Activated naive CD4-positive, alpha-beta T cell treated with anti-CD3 and anti-CD28 coated beads for 36 hours (primary cell): ENCODE measurements at regions of chrX and their contacts with region 1.

Region 1: GRCh38 chrX:12771445-12772069 is 19.7 kb upstream of the PRPS2 start:
- DNase-seq: peak; percentile 80
- H3K4me3 Mint-ChIP-seq: no peak overlapping the region
- H3K27ac Mint-ChIP-seq: no peak overlapping the region
- H3K4me1 Mint-ChIP-seq: peaks cover 6% of the 10 kb centered on the region
- H3K27me3 Mint-ChIP-seq: peaks cover 6% of the 10 kb centered on the region

Region 2: DNA sequence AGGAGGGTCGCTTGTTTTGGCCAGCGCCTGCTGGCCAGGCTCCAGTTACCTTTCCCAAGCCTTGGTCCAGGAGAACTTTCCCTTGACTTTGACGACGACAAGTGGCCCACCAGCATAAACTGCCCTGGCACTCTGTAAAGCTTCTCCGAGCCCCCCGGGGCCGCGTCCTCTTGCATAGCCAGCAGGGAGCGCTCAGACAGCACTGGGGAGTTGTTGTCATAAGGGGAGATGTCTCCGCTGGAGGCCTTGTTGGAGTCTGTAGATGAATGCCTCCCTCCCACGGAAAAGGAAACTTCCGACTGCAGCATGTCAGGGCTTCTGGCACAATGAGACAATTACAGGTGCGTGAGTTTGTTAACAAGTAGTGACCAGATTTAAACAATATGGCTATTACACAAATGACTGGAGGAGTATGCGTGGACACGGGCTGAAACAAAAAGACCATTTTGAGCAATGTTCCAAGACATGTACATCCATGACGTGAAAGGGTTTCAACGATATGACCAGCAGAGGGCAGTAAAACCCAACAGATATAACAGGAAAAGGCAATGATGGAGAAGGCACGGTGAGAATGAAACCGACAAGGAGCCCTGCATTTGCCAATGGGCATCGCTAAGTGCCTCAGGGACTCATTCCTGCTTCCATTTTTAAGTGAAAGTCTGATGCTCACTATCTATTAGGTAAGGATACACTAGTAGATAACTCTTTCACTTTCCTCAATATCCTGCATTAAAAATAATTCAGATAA is 1627.5 kb before region 1 on chrX:
- CTCF ChIA-PET with region 1: no interaction called
- intact Hi-C with region 1: loop called (anchors 10 kb)
- DNase-seq: peak; percentile 66
- H3K4me3 Mint-ChIP-seq: no peak overlapping the region
- H3K27ac Mint-ChIP-seq: no peak overlapping the region
- H3K4me1 Mint-ChIP-seq: peaks cover 2% of the 10 kb centered on the region
- H3K27me3 Mint-ChIP-seq: peaks cover 5% of the 10 kb centered on the region

Region 3: DNA sequence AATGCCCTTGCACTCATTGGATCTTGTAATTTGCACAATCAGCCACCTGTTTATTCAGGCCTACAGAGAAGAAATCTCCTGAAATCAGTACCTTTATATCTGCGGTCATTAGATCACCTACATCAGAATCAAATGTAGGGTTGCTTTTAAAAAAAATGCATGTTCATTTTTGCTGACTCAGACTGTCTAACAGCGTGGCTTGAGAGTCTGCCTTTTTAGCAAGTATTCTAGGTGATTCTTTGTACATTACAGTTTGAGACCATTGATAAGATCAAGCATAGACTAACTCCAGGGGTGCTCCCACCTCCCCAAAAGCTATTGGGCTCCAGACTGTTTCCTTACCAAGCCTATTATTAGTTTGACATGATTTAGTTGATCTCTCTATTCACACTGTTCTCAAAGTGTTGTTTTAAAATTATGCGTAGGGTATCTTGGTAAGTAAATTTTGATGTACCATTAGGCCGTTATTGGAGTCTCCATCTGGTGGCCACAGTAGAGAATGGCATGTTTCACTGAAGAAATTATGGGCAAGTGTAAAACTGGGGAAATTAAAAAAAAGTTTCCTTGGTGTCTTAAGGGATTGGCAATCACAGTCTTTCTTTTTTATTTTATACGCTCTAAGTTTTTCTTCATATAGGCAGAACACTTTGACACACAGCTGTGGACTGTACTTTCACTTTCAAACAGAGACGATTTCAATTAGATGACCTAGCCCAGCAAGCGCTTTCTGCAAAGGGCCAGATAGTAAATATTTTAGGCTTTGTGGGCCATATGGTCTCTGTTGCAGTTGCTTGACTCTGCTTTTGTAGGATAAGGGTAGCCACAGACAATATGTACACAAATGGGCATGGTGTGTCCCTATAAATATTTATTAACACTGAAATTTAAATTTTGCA is 1047.2 kb before region 1 on chrX:
- CTCF ChIA-PET with region 1: no interaction called
- intact Hi-C with region 1: loop called (anchors 2 kb)
- DNase-seq: peak; percentile 19
- H3K4me3 Mint-ChIP-seq: no peak overlapping the region
- H3K27ac Mint-ChIP-seq: no peak overlapping the region
- H3K4me1 Mint-ChIP-seq: no peaks in the 10 kb centered on the region
- H3K27me3 Mint-ChIP-seq: no peaks in the 10 kb centered on the region

Region 4: DNA sequence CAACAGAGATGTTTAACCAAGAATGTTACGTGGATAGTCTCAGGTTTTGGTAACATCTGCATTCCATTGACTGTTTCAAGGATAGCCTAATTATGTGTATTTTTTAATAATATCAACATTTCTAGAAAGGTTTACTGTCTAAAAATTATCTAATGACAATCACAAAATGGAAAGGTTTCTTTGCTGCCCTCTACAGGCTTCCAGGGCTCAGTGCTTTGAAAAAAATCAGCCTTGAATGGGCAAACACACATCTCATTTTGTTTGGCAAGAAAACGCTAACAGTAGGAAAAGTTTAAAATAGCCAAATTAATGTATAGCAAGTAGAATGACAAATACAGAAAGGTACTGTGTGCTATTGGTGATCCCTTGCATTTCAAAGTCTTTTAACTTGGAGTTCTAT is 203.7 kb before region 1 on chrX:
- CTCF ChIA-PET with region 1: no interaction called
- intact Hi-C with region 1: loop called (anchors 5 kb)
- DNase-seq: no peak
- H3K4me3 Mint-ChIP-seq: no peak overlapping the region
- H3K27ac Mint-ChIP-seq: no peak overlapping the region
- H3K4me1 Mint-ChIP-seq: no peaks in the 10 kb centered on the region
- H3K27me3 Mint-ChIP-seq: no peaks in the 10 kb centered on the region

Region 5: DNA sequence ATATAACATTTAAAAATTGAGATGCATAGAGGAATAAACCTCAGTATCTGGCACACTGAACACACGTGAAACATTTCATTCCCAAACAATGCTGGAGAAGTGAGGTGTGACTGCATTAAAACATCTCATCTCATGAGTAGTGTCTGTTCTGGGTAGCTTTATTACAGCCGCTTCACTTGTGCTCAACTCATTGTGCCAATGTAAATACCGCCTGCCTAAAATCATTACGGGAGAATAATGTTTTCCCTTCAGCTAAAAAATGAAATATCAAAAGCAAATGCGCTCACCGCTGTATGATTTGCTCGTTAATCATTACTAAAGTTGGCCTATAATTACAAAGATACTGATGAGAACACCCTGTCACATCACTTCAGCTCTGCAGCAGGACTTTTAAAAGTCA is 90.5 kb before region 1 on chrX:
- CTCF ChIA-PET with region 1: no interaction called
- intact Hi-C with region 1: no loop called
- DNase-seq: no peak
- H3K4me3 Mint-ChIP-seq: no peak overlapping the region
- H3K27ac Mint-ChIP-seq: no peak overlapping the region
- H3K4me1 Mint-ChIP-seq: no peaks in the 10 kb centered on the region
- H3K27me3 Mint-ChIP-seq: peaks cover 3% of the 10 kb centered on the region

Region 6: GRCh38 chrX:12751887-12752286 is 19.7 kb before region 1 on chrX:
- CTCF ChIA-PET with region 1: interaction called, 13 read pairs
- intact Hi-C with region 1: no loop called
- DNase-seq: no peak
- H3K4me3 Mint-ChIP-seq: no peak overlapping the region
- H3K27ac Mint-ChIP-seq: no peak overlapping the region
- H3K4me1 Mint-ChIP-seq: no peaks in the 10 kb centered on the region
- H3K27me3 Mint-ChIP-seq: peaks cover 2% of the 10 kb centered on the region

Region 7: GRCh38 chrX:12894074-12895030 is 122.8 kb after region 1 on chrX:
- CTCF ChIA-PET with region 1: interaction called, 12 read pairs
- intact Hi-C with region 1: loop called (anchors 1 kb)
- DNase-seq: peak; percentile 59
- H3K4me3 Mint-ChIP-seq: no peak overlapping the region
- H3K27ac Mint-ChIP-seq: no peak overlapping the region
- H3K4me1 Mint-ChIP-seq: peaks cover 31% of the 10 kb centered on the region
- H3K27me3 Mint-ChIP-seq: no peaks in the 10 kb centered on the region

Region 8: DNA sequence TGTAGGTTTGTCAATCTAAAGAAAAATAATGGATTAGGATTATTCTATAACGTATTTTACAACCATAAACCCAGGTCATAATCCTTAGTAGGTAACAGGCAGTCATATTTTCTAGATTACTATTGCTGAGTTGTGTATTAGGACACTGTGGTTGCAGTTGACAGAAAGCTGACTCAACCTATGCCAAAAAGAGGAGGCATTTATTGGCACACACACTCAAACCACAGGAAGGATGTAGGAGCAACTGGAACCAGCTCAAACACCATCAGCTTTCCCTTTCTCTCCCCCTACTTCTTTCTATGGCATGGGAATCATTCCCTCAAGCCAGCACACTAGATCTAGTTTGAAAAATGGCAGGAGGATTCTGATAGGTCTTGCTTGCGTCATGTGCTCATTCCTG is 409.2 kb after region 1 on chrX:
- CTCF ChIA-PET with region 1: no interaction called
- intact Hi-C with region 1: no loop called
- DNase-seq: no peak
- H3K4me3 Mint-ChIP-seq: no peak overlapping the region
- H3K27ac Mint-ChIP-seq: no peak overlapping the region
- H3K4me1 Mint-ChIP-seq: peaks cover 11% of the 10 kb centered on the region
- H3K27me3 Mint-ChIP-seq: no peaks in the 10 kb centered on the region

Region 9: DNA sequence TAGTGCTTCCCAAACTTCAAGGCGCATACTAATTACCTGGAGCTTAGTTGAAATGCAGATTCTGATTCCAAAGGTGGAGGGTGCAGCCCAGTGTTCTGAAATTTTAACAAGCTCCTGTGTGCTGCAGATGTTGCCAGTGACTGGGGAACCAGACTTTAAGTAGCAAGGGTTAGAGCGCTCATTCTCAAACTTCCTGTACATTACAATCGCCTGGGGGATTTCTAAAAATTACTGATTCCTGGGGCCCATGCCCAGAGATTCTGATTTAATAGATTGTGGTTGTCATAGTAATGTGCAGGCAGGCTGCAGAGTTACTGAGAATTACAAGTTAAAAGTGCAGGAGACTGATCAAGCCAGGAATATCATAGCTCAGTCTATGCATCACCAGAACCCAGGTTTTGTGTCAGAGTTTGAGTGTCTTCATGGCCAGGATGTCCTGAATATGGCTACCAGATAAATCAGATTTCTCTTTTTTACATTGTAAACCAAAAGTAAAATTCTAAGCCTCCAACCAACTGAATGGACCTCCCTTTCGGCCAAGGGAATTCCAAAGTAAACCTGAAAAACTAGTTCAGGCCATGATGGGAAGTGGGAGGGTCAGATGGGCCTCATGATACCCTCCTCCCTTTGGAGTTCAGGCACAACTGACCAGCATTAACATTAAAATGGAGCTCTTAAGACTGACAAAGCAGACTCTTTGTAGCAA is 426.7 kb after region 1 on chrX:
- CTCF ChIA-PET with region 1: no interaction called
- intact Hi-C with region 1: no loop called
- DNase-seq: no peak
- H3K4me3 Mint-ChIP-seq: no peak overlapping the region
- H3K27ac Mint-ChIP-seq: no peak overlapping the region
- H3K4me1 Mint-ChIP-seq: peaks cover 3% of the 10 kb centered on the region
- H3K27me3 Mint-ChIP-seq: no peaks in the 10 kb centered on the region